Tibial artery (tissue), 4 donors: ENCODE measurements at regions of chrX and their contacts with region 1.

Region 1: DNA sequence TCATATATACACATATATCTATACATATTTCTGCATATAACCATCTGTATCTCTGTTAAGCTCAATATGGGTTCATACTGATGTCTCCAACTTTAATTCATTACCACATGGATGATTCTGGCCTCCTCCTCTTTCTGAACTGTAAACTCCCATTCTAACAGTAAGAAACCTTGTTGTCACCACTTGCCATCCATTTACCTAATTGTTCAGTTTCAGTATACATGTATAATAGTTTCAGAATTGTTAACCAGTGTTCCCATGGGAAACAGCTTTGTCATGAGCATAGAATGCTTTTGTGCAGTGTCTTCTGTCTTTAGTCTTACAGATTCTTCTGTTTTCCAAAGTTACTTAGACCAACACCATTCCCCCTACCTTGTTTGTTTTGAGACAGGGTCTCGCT is 35.9 kb downstream of the SLC9A6 start:
- DNase-seq: no peak
- H3K4me3 ChIP-seq: no peak overlapping the region
- H3K27ac ChIP-seq: no peak overlapping the region
- H3K4me1 ChIP-seq: no peaks in the 10 kb centered on the region
- H3K27me3 ChIP-seq: no peaks in the 10 kb centered on the region
- CTCF ChIP-seq: no peak

Region 2: GRCh38 chrX:136275553-136275952 is 254.4 kb after region 1 on chrX:
- intact Hi-C with region 1: loop called (anchors 5 kb)
- DNase-seq: no peak
- H3K4me3 ChIP-seq: no peak overlapping the region
- H3K27ac ChIP-seq: no peak overlapping the region
- H3K4me1 ChIP-seq: peaks cover 0 to 13% (median 0%) of the 10 kb centered on the region in 4 donors
- H3K27me3 ChIP-seq: no peaks in the 10 kb centered on the region
- CTCF ChIP-seq: no peak